GM12878 (cell line): ENCODE measurements at regions of chr3 and their contacts with region 1.

Region 1: GRCh38 chr3:82133070-82133606 is 371.7 kb upstream of the GBE1 start:
- DNase-seq: peak; percentile 17
- ATAC-seq: peak; percentile 93
- H3K4me3 ChIP-seq: no peak overlapping the region
- H3K27ac ChIP-seq: no peak overlapping the region
- H3K4me1 ChIP-seq: no peaks in the 10 kb centered on the region
- H3K27me3 ChIP-seq: no peaks in the 10 kb centered on the region
- CTCF ChIP-seq: peak; percentile 78 to 83 (median 82)
- EP300 ChIP-seq: no peak
- POLR2A ChIP-seq: no peak
- RAD21 ChIP-seq: peak; percentile 79

Region 2: GRCh38 chr3:81419228-81419627 is 713.9 kb before region 1 on chr3:
- CTCF ChIA-PET with region 1: interaction called, 6 read pairs
- POLR2A ChIA-PET with region 1: no interaction called
- RAD21 ChIA-PET with region 1: no interaction called
- SMC1A ChIA-PET with region 1: interaction called, 3 read pairs
- in situ Hi-C with region 1: no loop called
- intact Hi-C with region 1: loop called (anchors 5 kb)
- DNase-seq: no peak
- ATAC-seq: peak; percentile 56
- H3K4me3 ChIP-seq: no peak overlapping the region
- H3K27ac ChIP-seq: no peak overlapping the region
- H3K4me1 ChIP-seq: no peaks in the 10 kb centered on the region
- H3K27me3 ChIP-seq: no peaks in the 10 kb centered on the region
- CTCF ChIP-seq: peak in 1 of 3 experiments; percentile 34; a peak in 2 of 6 replicates
- EP300 ChIP-seq: no peak
- POLR2A ChIP-seq: no peak
- RAD21 ChIP-seq: peak; percentile 48

Region 3: GRCh38 chr3:81581966-81582599 is 551.1 kb before region 1 on chr3:
- CTCF ChIA-PET with region 1: interaction called, 16 read pairs
- POLR2A ChIA-PET with region 1: no interaction called
- RAD21 ChIA-PET with region 1: no interaction called
- SMC1A ChIA-PET with region 1: interaction called, 8 read pairs
- in situ Hi-C with region 1: loop called (anchors 5 kb)
- intact Hi-C with region 1: loop called (anchors 1 kb)
- DNase-seq: peak; percentile 4
- ATAC-seq: peak; percentile 91
- H3K4me3 ChIP-seq: no peak overlapping the region
- H3K27ac ChIP-seq: no peak overlapping the region
- H3K4me1 ChIP-seq: no peaks in the 10 kb centered on the region
- H3K27me3 ChIP-seq: no peaks in the 10 kb centered on the region
- CTCF ChIP-seq: peak; percentile 67 to 76 (median 75)
- EP300 ChIP-seq: no peak
- POLR2A ChIP-seq: no peak
- RAD21 ChIP-seq: peak; percentile 77

Region 4: DNA sequence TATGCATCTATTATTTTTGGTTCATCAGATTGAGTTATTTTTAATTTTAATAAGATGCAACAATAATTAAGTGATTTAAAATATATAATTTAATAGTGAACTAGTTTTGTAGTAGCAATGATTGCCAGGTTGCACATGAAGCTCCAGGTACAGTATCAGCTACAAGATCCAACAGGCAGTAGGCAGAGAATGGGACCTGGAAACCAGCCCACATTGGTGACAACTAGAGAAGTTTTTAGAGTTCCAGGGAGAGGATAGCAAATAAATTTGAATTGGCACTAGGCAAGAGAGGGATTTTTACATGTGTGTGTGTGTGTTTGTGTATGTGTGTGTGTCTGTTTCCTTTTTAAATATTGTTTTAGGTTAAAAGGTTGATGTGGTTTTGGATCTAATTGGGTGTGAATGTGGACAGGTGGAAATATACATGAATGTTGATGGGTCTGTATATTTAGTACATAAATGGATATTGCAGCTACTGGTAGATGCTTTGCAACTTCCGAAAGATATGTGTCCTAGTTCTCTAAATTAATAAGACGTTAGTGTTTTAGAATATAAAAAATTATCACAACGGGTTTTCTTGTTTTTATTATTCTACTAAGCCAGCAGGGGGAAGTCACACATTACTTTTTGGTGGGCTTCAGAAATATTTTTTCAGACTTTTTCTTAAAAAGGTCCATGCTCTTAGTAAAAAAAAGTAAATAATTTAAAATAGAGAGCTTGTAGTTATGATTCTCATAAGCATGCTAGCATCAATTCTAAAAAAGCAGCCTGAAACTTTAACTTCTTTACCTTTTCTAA is 261.6 kb before region 1 on chr3:
- CTCF ChIA-PET with region 1: interaction called, 3 read pairs
- POLR2A ChIA-PET with region 1: no interaction called
- RAD21 ChIA-PET with region 1: no interaction called
- SMC1A ChIA-PET with region 1: no interaction called
- in situ Hi-C with region 1: no loop called
- intact Hi-C with region 1: loop called (anchors 5 kb)
- DNase-seq: no peak
- ATAC-seq: no peak
- H3K4me3 ChIP-seq: no peak overlapping the region
- H3K27ac ChIP-seq: no peak overlapping the region
- H3K4me1 ChIP-seq: no peaks in the 10 kb centered on the region
- H3K27me3 ChIP-seq: no peaks in the 10 kb centered on the region
- CTCF ChIP-seq: peak in 1 of 3 experiments; percentile 6; a peak in 1 of 6 replicates
- EP300 ChIP-seq: no peak
- POLR2A ChIP-seq: no peak
- RAD21 ChIP-seq: peak; percentile 67

Region 5: DNA sequence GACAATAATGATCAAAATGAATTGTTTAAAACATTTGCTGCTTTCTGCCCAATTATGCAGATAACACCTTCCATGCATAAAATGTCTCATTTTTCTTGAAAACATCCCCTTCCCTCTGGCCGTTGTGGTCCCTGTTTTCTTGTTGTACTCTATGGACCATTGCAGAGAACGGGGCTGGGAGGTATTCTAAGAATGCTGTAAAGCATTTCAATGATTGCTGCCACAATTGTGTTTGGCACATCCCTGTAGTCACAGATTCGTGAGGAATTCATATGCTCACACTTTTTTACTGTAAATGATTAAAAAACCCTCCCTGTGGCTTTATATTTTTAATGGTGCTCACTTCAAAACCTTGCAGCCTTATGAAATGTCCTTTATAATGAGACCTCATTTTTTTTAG is 164.5 kb before region 1 on chr3:
- CTCF ChIA-PET with region 1: no interaction called
- POLR2A ChIA-PET with region 1: no interaction called
- RAD21 ChIA-PET with region 1: no interaction called
- SMC1A ChIA-PET with region 1: no interaction called
- in situ Hi-C with region 1: no loop called
- intact Hi-C with region 1: no loop called
- DNase-seq: no peak
- ATAC-seq: no peak
- H3K4me3 ChIP-seq: no peak overlapping the region
- H3K27ac ChIP-seq: no peak overlapping the region
- H3K4me1 ChIP-seq: no peaks in the 10 kb centered on the region
- H3K27me3 ChIP-seq: no peaks in the 10 kb centered on the region
- CTCF ChIP-seq: no peak
- EP300 ChIP-seq: no peak
- POLR2A ChIP-seq: no peak
- RAD21 ChIP-seq: no peak

Region 6: GRCh38 chr3:82143661-82144412 is 10.7 kb after region 1 on chr3:
- CTCF ChIA-PET with region 1: interaction called, 11 read pairs
- POLR2A ChIA-PET with region 1: no interaction called
- RAD21 ChIA-PET with region 1: no interaction called
- SMC1A ChIA-PET with region 1: interaction called, 5 read pairs
- in situ Hi-C with region 1: no loop called
- intact Hi-C with region 1: no loop called
- DNase-seq: no peak
- ATAC-seq: peak; percentile 75
- H3K4me3 ChIP-seq: no peak overlapping the region
- H3K27ac ChIP-seq: no peak overlapping the region
- H3K4me1 ChIP-seq: no peaks in the 10 kb centered on the region
- H3K27me3 ChIP-seq: no peaks in the 10 kb centered on the region
- CTCF ChIP-seq: no peak
- EP300 ChIP-seq: no peak
- POLR2A ChIP-seq: no peak
- RAD21 ChIP-seq: no peak

Region 7: DNA sequence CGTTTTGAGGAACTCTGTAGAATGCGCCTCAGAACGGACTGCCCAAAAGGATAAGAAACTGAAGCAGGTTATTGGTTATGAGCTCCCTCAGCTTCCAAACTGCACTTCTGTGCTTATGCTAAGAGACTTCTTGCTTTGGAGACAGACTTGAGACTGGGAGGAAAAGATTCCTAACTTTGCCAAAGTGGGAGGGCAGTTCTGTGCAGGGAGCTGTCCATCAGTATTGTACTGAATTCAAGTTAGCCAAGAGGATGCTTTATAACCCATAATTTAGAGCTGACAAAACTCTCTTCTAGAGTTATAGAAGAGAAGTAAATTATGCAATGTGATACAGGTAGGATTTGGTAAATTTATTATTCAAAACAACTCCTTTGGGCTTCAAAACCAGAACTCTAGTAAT is 148.1 kb after region 1 on chr3:
- CTCF ChIA-PET with region 1: no interaction called
- POLR2A ChIA-PET with region 1: no interaction called
- RAD21 ChIA-PET with region 1: no interaction called
- SMC1A ChIA-PET with region 1: no interaction called
- in situ Hi-C with region 1: no loop called
- intact Hi-C with region 1: no loop called
- DNase-seq: no peak
- ATAC-seq: no peak
- H3K4me3 ChIP-seq: no peak overlapping the region
- H3K27ac ChIP-seq: no peak overlapping the region
- H3K4me1 ChIP-seq: no peaks in the 10 kb centered on the region
- H3K27me3 ChIP-seq: no peaks in the 10 kb centered on the region
- CTCF ChIP-seq: no peak
- EP300 ChIP-seq: no peak
- POLR2A ChIP-seq: no peak
- RAD21 ChIP-seq: no peak